Natural killer cell (primary cell): ENCODE measurements at regions of chr13 and their contacts with region 1.

Region 1: DNA sequence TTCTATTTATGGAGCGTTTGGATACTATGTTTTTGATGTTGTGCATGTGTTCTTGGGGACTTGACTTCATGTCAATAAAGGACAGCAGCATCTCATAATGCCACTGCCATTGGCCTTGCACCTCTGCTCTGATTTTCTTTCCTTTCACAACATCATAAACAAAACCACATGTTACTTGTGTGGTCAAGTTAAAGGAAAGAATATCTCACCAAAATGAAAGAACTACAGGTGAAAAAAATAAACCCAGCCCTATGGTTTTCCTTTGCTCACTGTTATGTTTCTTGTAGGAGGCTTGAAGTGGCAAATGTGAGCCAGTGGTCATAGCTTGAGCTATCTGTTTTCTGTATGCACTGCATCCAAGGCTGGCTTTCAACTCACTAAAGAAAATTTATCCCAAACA is 240.4 kb downstream of the KCNRG start:
- DNase-seq: peak in 1 of 2 donors; percentile 60
- ATAC-seq: peak; percentile 84 to 93 (median 88)
- H3K4me3 ChIP-seq: no peak overlapping the region
- H3K4me3 Mint-ChIP-seq: peak overlapping the region; percentile 80
- H3K27ac ChIP-seq: peak overlapping the region; percentile 14
- H3K27ac Mint-ChIP-seq: peak overlapping the region; percentile 49 to 66
- H3K4me1 ChIP-seq: peaks cover 15% of the 10 kb centered on the region
- H3K4me1 Mint-ChIP-seq: peaks cover 41 to 48% of the 10 kb centered on the region in 2 donors
- H3K27me3 ChIP-seq: no peaks in the 10 kb centered on the region
- H3K27me3 Mint-ChIP-seq: peaks cover 8 to 13% of the 10 kb centered on the region in 2 donors
- CTCF ChIP-seq: no peak

Region 2: GRCh38 chr13:50236898-50237318 is 18.7 kb before region 1 on chr13:
- intact Hi-C with region 1: loop called (anchors 2 kb)
- DNase-seq: peak in 1 of 2 donors; percentile 79
- ATAC-seq: peak; percentile 91 to 98 (median 91)
- H3K4me3 ChIP-seq: peak overlapping the region; percentile 3
- H3K4me3 Mint-ChIP-seq: peak overlapping the region; percentile 78
- H3K27ac ChIP-seq: peak overlapping the region; percentile 50
- H3K27ac Mint-ChIP-seq: peak overlapping the region; percentile 84 to 85
- H3K4me1 ChIP-seq: peaks cover 5% of the 10 kb centered on the region
- H3K4me1 Mint-ChIP-seq: peaks cover 22 to 28% of the 10 kb centered on the region in 2 donors
- H3K27me3 ChIP-seq: no peaks in the 10 kb centered on the region
- H3K27me3 Mint-ChIP-seq: peaks cover 0 to 3% of the 10 kb centered on the region in 2 donors
- CTCF ChIP-seq: no peak

Region 3: GRCh38 chr13:50512474-50513299 is 257.0 kb after region 1 on chr13:
- intact Hi-C with region 1: loop called (anchors 10 kb)
- DNase-seq: peak; percentile 37 to 65
- ATAC-seq: peak; percentile 86 to 89 (median 86)
- H3K4me3 ChIP-seq: peak overlapping the region; percentile 33
- H3K4me3 Mint-ChIP-seq: no peak overlapping the region
- H3K27ac ChIP-seq: peak overlapping the region; percentile 85
- H3K27ac Mint-ChIP-seq: no peak overlapping the region
- H3K4me1 ChIP-seq: peaks cover 15% of the 10 kb centered on the region
- H3K4me1 Mint-ChIP-seq: peaks cover 0 to 4% of the 10 kb centered on the region in 2 donors
- H3K27me3 ChIP-seq: no peaks in the 10 kb centered on the region
- H3K27me3 Mint-ChIP-seq: no peaks in the 10 kb centered on the region
- CTCF ChIP-seq: no peak